Right ventricle myocardium superior (tissue), 1 donor: ENCODE measurements at regions of chr18 and their contacts with region 1.

Region 1: GRCh38 chr18:31079973-31080372 is 22.2 kb downstream of the DSC2 start:
- DNase-seq: no peak
- ATAC-seq: no peak

Region 2: GRCh38 chr18:30920351-30920750 is 159.6 kb before region 1 on chr18:
- intact Hi-C with region 1: no loop called
- DNase-seq: no peak
- ATAC-seq: no peak

Region 3: DNA sequence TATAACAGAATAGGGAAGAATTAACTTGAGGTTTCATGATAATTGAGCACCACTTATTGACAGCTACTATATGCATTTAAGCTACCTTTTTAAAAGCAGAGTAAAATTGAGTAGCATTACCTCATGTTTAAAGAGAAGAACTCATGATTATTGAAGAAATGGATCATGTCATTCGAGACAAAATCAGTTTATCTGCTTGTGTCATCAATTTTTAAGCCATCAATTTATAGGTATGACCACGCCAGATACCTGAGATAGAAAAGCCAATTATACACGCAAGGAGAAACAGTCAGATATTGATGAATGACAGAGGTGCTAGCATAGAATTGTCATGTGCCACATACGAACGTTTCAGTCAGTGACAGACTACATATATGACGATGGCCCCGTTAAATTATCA is 446.4 kb after region 1 on chr18:
- intact Hi-C with region 1: loop called (anchors 10 kb)
- DNase-seq: no peak
- ATAC-seq: no peak